Naive thymus-derived CD8-positive, alpha-beta T cell (primary cell): ENCODE measurements at regions of chr5 and their contacts with region 1.

Region 1: DNA sequence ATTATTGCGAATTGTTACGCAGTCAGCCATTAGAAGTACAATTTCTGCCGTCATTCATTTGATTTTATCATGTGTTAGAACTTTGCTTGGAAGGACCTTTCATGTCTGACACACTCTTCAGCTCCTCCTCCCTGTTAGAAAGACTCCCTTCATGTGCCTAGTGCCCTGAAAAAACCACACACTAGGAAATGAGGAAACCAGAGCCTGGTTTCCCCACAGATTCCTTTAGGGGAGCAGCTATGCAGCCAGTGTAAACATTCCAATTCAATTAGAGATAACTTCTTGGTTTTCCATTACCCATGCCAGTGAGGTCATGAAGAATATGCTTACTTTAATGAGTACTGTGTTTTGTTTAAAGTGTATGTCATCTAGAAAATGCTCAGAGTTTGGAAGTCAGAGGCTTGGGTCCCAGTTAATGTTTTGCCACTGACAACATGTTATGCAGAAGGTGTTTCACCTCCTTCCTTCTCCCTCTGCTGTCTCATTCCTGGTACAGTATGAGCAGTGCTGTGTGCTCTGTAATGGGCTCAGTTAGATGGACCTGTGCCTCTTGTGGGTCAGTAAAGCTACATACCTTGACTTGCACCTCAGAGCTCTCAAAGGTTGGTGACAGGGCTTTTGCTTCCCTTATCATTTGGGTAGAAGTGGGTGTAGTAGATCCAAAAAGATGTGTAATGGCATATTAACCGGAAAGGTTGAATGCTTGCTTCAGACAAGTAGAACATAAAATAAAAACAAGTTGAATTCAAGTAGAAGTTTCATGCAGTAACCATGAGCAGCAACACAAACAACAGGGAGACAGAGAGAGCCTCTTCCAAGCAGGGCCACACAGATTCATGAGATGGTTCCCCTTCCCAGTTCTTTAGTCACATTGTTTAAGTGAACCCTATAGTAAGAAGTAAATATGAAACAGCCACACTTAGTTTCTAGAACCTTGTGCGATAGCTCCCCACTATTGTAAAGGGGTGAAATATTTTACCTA is 52.6 kb upstream of the TNFAIP8 start:
- DNase-seq: peak in 1 of 10 donors; percentile 34
- ATAC-seq: peak; percentile 52 to 71
- H3K4me3 Mint-ChIP-seq: peak overlapping the region; percentile 31 to 89 (median 72)
- H3K27ac Mint-ChIP-seq: peak overlapping the region; percentile 85 to 100 (median 97)
- H3K4me1 Mint-ChIP-seq: peaks cover 44 to 95% (median 84%) of the 10 kb centered on the region in 4 donors
- H3K27me3 Mint-ChIP-seq: no peaks in the 10 kb centered on the region

Region 2: GRCh38 chr5:119274767-119275130 is 28.5 kb before region 1 on chr5:
- POLR2A ChIA-PET with region 1: interaction called, 42 read pairs
- DNase-seq: no peak
- ATAC-seq: peak in 1 of 2 donors; percentile 43
- H3K4me3 Mint-ChIP-seq: peak overlapping the region; percentile 96 to 100 (median 100)
- H3K27ac Mint-ChIP-seq: peak overlapping the region; percentile 93 to 98 (median 96)
- H3K4me1 Mint-ChIP-seq: peaks cover 42 to 98% (median 88%) of the 10 kb centered on the region in 4 donors
- H3K27me3 Mint-ChIP-seq: peaks cover 0 to 2% (median 0%) of the 10 kb centered on the region in 5 donors